Sigmoid colon (tissue), 7 donors: ENCODE measurements at regions of chr14 and their contacts with region 1.

Region 1: GRCh38 chr14:73785873-73786695 is 65.5 kb upstream of the PTGR2 start:
- DNase-seq: peak; percentile 94
- H3K4me3 ChIP-seq: peak overlapping the region; percentile 51 to 77 (median 70)
- H3K27ac ChIP-seq: peak overlapping the region; percentile 96 to 99 (median 98)
- H3K4me1 ChIP-seq: peaks cover 0 to 81% (median 74%) of the 10 kb centered on the region in 4 donors
- H3K27me3 ChIP-seq: no peaks in the 10 kb centered on the region
- CTCF ChIP-seq: peak in 2 of 4 experiments; percentile 37 to 59
- EP300 ChIP-seq: peak in 1 of 4 donors; percentile 49
- POLR2A ChIP-seq: peak; percentile 78 to 84

Region 2: DNA sequence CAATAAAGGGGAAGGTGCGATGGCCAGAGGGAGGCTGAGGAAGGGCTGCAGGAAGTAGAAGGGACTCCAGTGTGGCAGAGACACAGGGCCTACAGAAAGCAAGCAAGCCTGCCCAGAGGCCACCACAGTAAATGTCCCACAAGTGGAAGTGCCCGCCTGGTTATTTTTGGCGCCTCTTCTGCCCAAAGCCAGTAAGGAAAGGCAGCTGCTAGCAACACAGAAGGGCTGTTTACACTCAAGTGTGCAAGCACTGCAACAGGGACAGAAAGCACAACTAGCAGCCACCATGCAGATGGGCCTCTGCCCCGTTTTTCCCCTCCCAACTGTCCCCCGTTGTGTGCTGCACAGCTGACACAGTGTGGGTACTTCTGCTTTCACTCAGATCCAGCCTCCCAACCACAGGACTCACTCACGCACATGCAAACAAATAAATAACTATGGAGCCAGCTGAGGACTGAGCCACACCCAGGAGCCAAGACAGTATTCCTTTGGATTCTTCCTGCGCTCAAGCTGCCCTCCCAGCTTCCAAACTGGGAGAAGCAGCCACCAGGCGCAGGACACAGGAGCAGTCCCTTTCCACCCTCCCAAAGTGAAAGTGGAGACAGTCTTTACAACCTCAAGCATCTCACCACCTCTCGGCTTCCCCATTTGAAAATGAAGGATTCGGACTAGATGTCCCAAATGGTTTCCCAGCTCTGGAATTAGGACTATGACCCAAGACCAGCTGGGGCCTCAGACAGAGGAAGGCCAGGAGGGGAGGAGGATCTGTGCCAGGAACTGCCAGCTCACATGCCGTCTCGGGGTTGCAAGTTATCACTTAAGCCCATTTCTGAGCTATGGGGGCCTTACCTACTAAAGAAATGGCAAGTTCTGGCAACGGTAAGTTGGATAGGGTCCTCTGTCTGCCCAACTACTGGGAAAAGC is 31.9 kb before region 1 on chr14:
- intact Hi-C with region 1: loop called (anchors 5 kb)
- DNase-seq: peak; percentile 83
- H3K4me3 ChIP-seq: peak overlapping the region in 3 of 4 donors; percentile 9 to 35 (median 34)
- H3K27ac ChIP-seq: peak overlapping the region; percentile 99 to 100 (median 100)
- H3K4me1 ChIP-seq: peaks cover 0 to 99% (median 98%) of the 10 kb centered on the region in 4 donors
- H3K27me3 ChIP-seq: no peaks in the 10 kb centered on the region
- CTCF ChIP-seq: no peak
- EP300 ChIP-seq: no peak
- POLR2A ChIP-seq: no peak

Region 3: DNA sequence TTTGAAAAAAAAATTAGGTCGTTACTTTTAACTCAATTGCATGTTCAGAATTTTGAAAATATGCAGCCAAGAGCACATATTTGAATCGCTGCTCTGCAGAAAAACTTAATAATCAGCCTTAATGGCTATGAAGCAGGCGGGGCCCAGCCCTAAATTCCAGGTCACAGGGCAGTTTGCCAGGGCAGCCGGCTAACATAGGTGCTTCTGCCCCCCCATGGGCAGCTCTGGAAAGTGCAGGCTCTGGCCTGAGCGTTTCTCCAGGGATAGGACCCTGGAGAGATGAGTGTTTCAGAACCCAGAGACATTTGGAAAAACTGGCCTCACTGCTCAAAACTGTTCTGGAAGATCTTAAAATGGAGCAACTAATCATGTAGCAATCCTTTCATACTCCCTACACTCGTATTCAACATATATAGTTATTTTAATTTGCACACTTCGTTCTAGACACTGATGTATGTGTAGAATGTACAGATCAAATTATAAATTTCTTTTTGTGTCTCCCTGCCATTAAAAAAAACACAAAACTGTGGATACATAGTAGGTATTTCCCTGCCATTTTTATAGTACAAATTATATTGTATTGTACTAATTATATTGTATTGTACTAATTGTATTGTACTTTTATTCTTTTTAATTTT is 39.6 kb after region 1 on chr14:
- intact Hi-C with region 1: no loop called
- DNase-seq: peak; percentile 96
- H3K4me3 ChIP-seq: no peak overlapping the region
- H3K27ac ChIP-seq: peak overlapping the region; percentile 2 to 53 (median 22)
- H3K4me1 ChIP-seq: peaks cover 0 to 10% (median 6%) of the 10 kb centered on the region in 4 donors
- H3K27me3 ChIP-seq: no peaks in the 10 kb centered on the region
- CTCF ChIP-seq: peak; percentile 66 to 95 (median 92)
- EP300 ChIP-seq: no peak
- POLR2A ChIP-seq: no peak

Region 4: GRCh38 chr14:74549588-74549987 is 763.5 kb after region 1 on chr14:
- intact Hi-C with region 1: no loop called
- DNase-seq: no peak
- H3K4me3 ChIP-seq: no peak overlapping the region
- H3K27ac ChIP-seq: no peak overlapping the region
- H3K4me1 ChIP-seq: peaks cover 0 to 8% (median 0%) of the 10 kb centered on the region in 4 donors
- H3K27me3 ChIP-seq: no peaks in the 10 kb centered on the region
- CTCF ChIP-seq: no peak
- EP300 ChIP-seq: no peak
- POLR2A ChIP-seq: no peak